CD4-positive, alpha-beta memory T cell (primary cell): ENCODE measurements at regions of chr9 and their contacts with region 1.

Region 1: GRCh38 chr9:134443168-134444037 is 117.1 kb downstream of the RXRA start:
- DNase-seq: peak; percentile 84 to 94 (median 86)
- H3K4me3 ChIP-seq: no peak overlapping the region
- H3K4me3 Mint-ChIP-seq: peak overlapping the region in 2 of 8 donors; percentile 31 to 43
- H3K27ac ChIP-seq: no peak overlapping the region
- H3K27ac Mint-ChIP-seq: peak overlapping the region; percentile 47 to 81 (median 70)
- H3K4me1 ChIP-seq: peaks cover 17% of the 10 kb centered on the region
- H3K4me1 Mint-ChIP-seq: peaks cover 8 to 22% (median 14%) of the 10 kb centered on the region in 4 donors
- H3K27me3 ChIP-seq: no peaks in the 10 kb centered on the region
- H3K27me3 Mint-ChIP-seq: no peaks in the 10 kb centered on the region

Region 2: GRCh38 chr9:133701862-133702797 is 741.3 kb before region 1 on chr9:
- CTCF ChIA-PET with region 1: no interaction called
- POLR2A ChIA-PET with region 1: no interaction called
- intact Hi-C with region 1: no loop called
- DNase-seq: peak; percentile 69 to 81 (median 75)
- H3K4me3 ChIP-seq: peak overlapping the region; percentile 27 to 61
- H3K4me3 Mint-ChIP-seq: peak overlapping the region; percentile 83 to 93 (median 89)
- H3K27ac ChIP-seq: peak overlapping the region; percentile 74
- H3K27ac Mint-ChIP-seq: peak overlapping the region; percentile 96 to 99 (median 98)
- H3K4me1 ChIP-seq: peaks cover 65% of the 10 kb centered on the region
- H3K4me1 Mint-ChIP-seq: peaks cover 36 to 75% (median 53%) of the 10 kb centered on the region in 4 donors
- H3K27me3 ChIP-seq: no peaks in the 10 kb centered on the region
- H3K27me3 Mint-ChIP-seq: no peaks in the 10 kb centered on the region

Region 3: GRCh38 chr9:134163353-134164196 is 279.8 kb before region 1 on chr9:
- CTCF ChIA-PET with region 1: interaction called, 60 read pairs
- POLR2A ChIA-PET with region 1: interaction called, 13 read pairs
- intact Hi-C with region 1: no loop called
- DNase-seq: peak; percentile 71 to 82 (median 74)
- H3K4me3 ChIP-seq: peak overlapping the region in 1 of 2 donors; percentile 29
- H3K4me3 Mint-ChIP-seq: no peak overlapping the region
- H3K27ac ChIP-seq: no peak overlapping the region
- H3K27ac Mint-ChIP-seq: peak overlapping the region in 2 of 7 donors; percentile 32 to 75
- H3K4me1 ChIP-seq: peaks cover 9% of the 10 kb centered on the region
- H3K4me1 Mint-ChIP-seq: peaks cover 8 to 28% (median 12%) of the 10 kb centered on the region in 4 donors
- H3K27me3 ChIP-seq: no peaks in the 10 kb centered on the region
- H3K27me3 Mint-ChIP-seq: peaks cover 0 to 2% of the 10 kb centered on the region in 2 donors

Region 4: GRCh38 chr9:134175808-134176598 is 267.4 kb before region 1 on chr9:
- CTCF ChIA-PET with region 1: interaction called, 60 read pairs
- POLR2A ChIA-PET with region 1: interaction called, 8 read pairs
- intact Hi-C with region 1: no loop called
- DNase-seq: no peak
- H3K4me3 ChIP-seq: no peak overlapping the region
- H3K4me3 Mint-ChIP-seq: no peak overlapping the region
- H3K27ac ChIP-seq: no peak overlapping the region
- H3K27ac Mint-ChIP-seq: no peak overlapping the region
- H3K4me1 ChIP-seq: no peaks in the 10 kb centered on the region
- H3K4me1 Mint-ChIP-seq: peaks cover 2 to 17% (median 4%) of the 10 kb centered on the region in 4 donors
- H3K27me3 ChIP-seq: no peaks in the 10 kb centered on the region
- H3K27me3 Mint-ChIP-seq: no peaks in the 10 kb centered on the region

Region 5: GRCh38 chr9:134391314-134392231 is 51.8 kb before region 1 on chr9:
- CTCF ChIA-PET with region 1: interaction called, 10 read pairs
- POLR2A ChIA-PET with region 1: interaction called, 4 read pairs
- intact Hi-C with region 1: loop called (anchors 2 kb)
- DNase-seq: peak; percentile 80 to 96 (median 82)
- H3K4me3 ChIP-seq: peak overlapping the region; percentile 41 to 52
- H3K4me3 Mint-ChIP-seq: peak overlapping the region; percentile 79 to 90 (median 84)
- H3K27ac ChIP-seq: peak overlapping the region; percentile 97
- H3K27ac Mint-ChIP-seq: peak overlapping the region; percentile 97 to 99 (median 98)
- H3K4me1 ChIP-seq: peaks cover 67% of the 10 kb centered on the region
- H3K4me1 Mint-ChIP-seq: peaks cover 33 to 71% (median 55%) of the 10 kb centered on the region in 4 donors
- H3K27me3 ChIP-seq: no peaks in the 10 kb centered on the region
- H3K27me3 Mint-ChIP-seq: no peaks in the 10 kb centered on the region

Region 6: DNA sequence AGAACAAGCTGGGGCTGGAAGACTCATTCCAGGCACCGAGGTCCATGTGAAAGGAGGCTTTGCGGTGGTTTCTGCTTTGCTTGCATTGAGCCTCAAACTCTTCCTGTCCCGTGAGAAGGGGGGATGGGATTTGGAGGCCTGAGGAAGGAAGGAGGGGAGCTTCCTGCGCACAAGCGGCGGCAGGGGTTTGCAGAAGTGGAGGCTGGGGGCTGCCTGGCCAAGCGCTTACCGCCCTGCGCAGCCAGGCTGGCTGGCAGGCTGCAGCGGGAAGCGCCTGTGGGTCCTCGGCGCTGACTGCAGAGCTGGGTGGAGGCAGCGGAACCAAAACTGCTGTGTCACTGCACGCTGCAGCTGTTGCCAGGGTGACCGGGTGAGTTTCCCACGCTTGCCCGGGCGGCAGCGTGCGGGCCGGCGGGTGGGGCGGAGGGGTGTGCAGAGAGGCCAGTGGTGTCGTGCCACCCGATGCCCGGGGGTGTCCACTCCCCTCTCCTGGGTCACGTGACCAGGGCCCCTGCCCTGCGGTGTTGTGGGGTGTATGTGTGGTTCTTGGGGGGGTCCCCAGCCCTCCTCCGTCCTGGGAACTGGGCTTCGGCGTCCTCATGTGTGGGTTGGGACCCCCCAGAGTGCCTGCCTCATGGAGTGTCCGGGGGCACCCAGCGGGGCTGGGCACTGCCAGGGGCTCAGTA is 36.1 kb before region 1 on chr9:
- CTCF ChIA-PET with region 1: interaction called, 11 read pairs
- POLR2A ChIA-PET with region 1: interaction called, 4 read pairs
- intact Hi-C with region 1: no loop called
- DNase-seq: peak; percentile 71 to 79 (median 79)
- H3K4me3 ChIP-seq: peak overlapping the region; percentile 48 to 55
- H3K4me3 Mint-ChIP-seq: peak overlapping the region; percentile 40 to 87 (median 80)
- H3K27ac ChIP-seq: peak overlapping the region; percentile 49
- H3K27ac Mint-ChIP-seq: peak overlapping the region; percentile 4 to 89 (median 75)
- H3K4me1 ChIP-seq: peaks cover 57% of the 10 kb centered on the region
- H3K4me1 Mint-ChIP-seq: peaks cover 24 to 60% (median 39%) of the 10 kb centered on the region in 4 donors
- H3K27me3 ChIP-seq: no peaks in the 10 kb centered on the region
- H3K27me3 Mint-ChIP-seq: no peaks in the 10 kb centered on the region

Region 7: GRCh38 chr9:134433101-134433500 is 10.3 kb before region 1 on chr9:
- CTCF ChIA-PET with region 1: no interaction called
- POLR2A ChIA-PET with region 1: no interaction called
- intact Hi-C with region 1: no loop called
- DNase-seq: no peak
- H3K4me3 ChIP-seq: no peak overlapping the region
- H3K4me3 Mint-ChIP-seq: no peak overlapping the region
- H3K27ac ChIP-seq: no peak overlapping the region
- H3K27ac Mint-ChIP-seq: no peak overlapping the region
- H3K4me1 ChIP-seq: no peaks in the 10 kb centered on the region
- H3K4me1 Mint-ChIP-seq: peaks cover 0 to 3% (median 0%) of the 10 kb centered on the region in 4 donors
- H3K27me3 ChIP-seq: no peaks in the 10 kb centered on the region
- H3K27me3 Mint-ChIP-seq: no peaks in the 10 kb centered on the region

Region 8: DNA sequence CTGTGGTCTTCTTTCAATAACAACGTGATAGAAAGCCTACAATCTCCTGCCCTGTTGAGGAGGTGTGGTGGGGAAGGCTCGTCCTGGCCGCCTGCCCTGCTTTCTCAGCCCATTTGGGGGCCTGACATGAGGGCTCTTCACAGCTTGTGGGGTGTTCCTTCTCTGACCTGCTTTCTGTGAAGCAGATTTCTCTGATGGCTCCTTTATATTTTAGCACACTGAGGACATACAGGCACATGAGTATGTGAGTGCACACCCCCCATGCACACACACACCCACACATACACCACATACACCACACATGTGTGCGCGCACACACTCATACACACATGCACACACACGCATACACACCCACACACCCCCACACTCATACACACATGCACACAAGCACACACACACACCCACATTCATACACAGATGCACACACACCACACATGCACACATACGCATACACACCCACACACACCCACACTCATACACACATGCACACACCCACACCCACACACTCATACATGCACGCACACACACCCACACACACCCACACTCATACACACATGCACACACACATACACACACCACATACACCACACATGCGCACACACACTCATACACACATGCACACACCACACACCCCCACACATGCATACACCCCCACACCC is 315.7 kb after region 1 on chr9:
- CTCF ChIA-PET with region 1: no interaction called
- POLR2A ChIA-PET with region 1: no interaction called
- intact Hi-C with region 1: no loop called
- DNase-seq: no peak
- H3K4me3 ChIP-seq: no peak overlapping the region
- H3K4me3 Mint-ChIP-seq: no peak overlapping the region
- H3K27ac ChIP-seq: no peak overlapping the region
- H3K27ac Mint-ChIP-seq: no peak overlapping the region
- H3K4me1 ChIP-seq: no peaks in the 10 kb centered on the region
- H3K4me1 Mint-ChIP-seq: no peaks in the 10 kb centered on the region
- H3K27me3 ChIP-seq: no peaks in the 10 kb centered on the region
- H3K27me3 Mint-ChIP-seq: peaks cover 0 to 3% of the 10 kb centered on the region in 2 donors